ENCODE measurements at regions of chr19 and their contacts with region 1.

Region 1: DNA sequence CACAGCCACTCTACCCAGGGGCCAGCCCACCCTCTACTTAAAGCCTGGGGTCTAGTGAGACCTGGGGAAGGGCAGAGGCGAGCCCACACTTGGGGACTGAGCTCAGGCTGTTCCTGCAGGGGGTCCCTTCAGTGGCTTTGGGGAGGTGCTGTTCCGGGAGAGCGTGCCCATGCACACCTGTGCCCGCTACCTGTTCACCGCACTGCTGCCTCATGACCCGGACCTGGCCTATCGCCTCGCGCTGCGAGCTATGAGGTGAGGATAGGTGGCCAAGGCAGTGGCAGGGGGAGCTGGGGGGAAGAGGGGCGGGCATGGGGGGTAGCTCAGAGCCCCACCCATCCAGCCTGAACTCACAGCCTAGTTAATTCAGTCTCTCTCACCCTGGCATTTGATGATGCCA is 24.0 kb downstream of the ZSWIM4 start:
- DNase-seq: no peak
- H3K4me3 ChIP-seq: no peak overlapping the region
- H3K27ac ChIP-seq: no peak overlapping the region
- H3K4me1 ChIP-seq: no peaks in the 10 kb centered on the region
- H3K27me3 ChIP-seq: no peaks in the 10 kb centered on the region
- CTCF ChIP-seq: no peak

Region 2: GRCh38 chr19:13839130-13839937 is 20.1 kb after region 1 on chr19:
- CTCF ChIA-PET with region 1: no interaction called
- POLR2A ChIA-PET with region 1: interaction called, 17 read pairs
- intact Hi-C with region 1: no loop called
- DNase-seq: peak; percentile 86 to 89
- H3K4me3 ChIP-seq: peak overlapping the region; percentile 61
- H3K27ac ChIP-seq: peak overlapping the region; percentile 97
- H3K4me1 ChIP-seq: peaks cover 72% of the 10 kb centered on the region
- H3K27me3 ChIP-seq: no peaks in the 10 kb centered on the region
- CTCF ChIP-seq: no peak

Region 3: GRCh38 chr19:13920940-13921761 is 101.9 kb after region 1 on chr19:
- CTCF ChIA-PET with region 1: no interaction called
- POLR2A ChIA-PET with region 1: no interaction called
- intact Hi-C with region 1: no loop called
- DNase-seq: peak in 1 of 2 experiments; percentile 72
- H3K4me3 ChIP-seq: no peak overlapping the region
- H3K27ac ChIP-seq: no peak overlapping the region
- H3K4me1 ChIP-seq: no peaks in the 10 kb centered on the region
- H3K27me3 ChIP-seq: no peaks in the 10 kb centered on the region
- CTCF ChIP-seq: no peak